Tibial artery (tissue), 4 donors: ENCODE measurements at regions of chr7 and their contacts with region 1.

Region 1: GRCh38 chr7:123682690-123683089 is 27.0 kb downstream of the LMOD2 start:
- DNase-seq: no peak
- H3K4me3 ChIP-seq: no peak overlapping the region
- H3K27ac ChIP-seq: no peak overlapping the region
- H3K4me1 ChIP-seq: no peaks in the 10 kb centered on the region
- H3K27me3 ChIP-seq: no peaks in the 10 kb centered on the region
- CTCF ChIP-seq: peak; percentile 50 to 54

Region 2: DNA sequence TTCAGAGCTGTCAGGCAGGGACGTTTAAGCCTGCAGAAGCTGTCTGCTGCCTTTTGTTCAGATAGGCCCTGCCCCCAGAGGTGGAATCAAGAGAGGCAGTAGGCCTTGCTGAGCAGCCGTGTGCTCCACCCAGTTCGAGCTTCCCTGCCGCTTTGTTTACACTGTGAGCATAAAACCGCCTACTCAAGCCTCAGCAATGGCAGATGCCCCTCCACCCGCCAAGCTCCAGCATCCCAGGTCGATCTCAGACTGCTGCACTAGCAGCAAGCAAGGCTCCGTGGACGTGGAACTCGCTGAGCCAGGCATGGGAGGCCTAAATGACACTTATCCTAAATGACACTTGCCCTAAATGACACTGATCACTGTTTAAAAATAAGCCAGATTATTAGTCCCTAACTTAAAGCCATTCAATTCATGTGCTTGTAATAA is 87.9 kb before region 1 on chr7:
- intact Hi-C with region 1: no loop called
- DNase-seq: no peak
- H3K4me3 ChIP-seq: no peak overlapping the region
- H3K27ac ChIP-seq: no peak overlapping the region
- H3K4me1 ChIP-seq: no peaks in the 10 kb centered on the region
- H3K27me3 ChIP-seq: no peaks in the 10 kb centered on the region
- CTCF ChIP-seq: no peak

Region 3: GRCh38 chr7:123865517-123866117 is 182.9 kb after region 1 on chr7:
- intact Hi-C with region 1: loop called (anchors 5 kb)
- DNase-seq: peak in 1 of 2 donors; percentile 32
- H3K4me3 ChIP-seq: no peak overlapping the region
- H3K27ac ChIP-seq: no peak overlapping the region
- H3K4me1 ChIP-seq: peaks cover 0 to 7% (median 0%) of the 10 kb centered on the region in 4 donors
- H3K27me3 ChIP-seq: no peaks in the 10 kb centered on the region
- CTCF ChIP-seq: peak; percentile 70 to 75

Region 4: GRCh38 chr7:124276019-124276622 is 593.4 kb after region 1 on chr7:
- intact Hi-C with region 1: no loop called
- DNase-seq: no peak
- H3K4me3 ChIP-seq: no peak overlapping the region
- H3K27ac ChIP-seq: no peak overlapping the region
- H3K4me1 ChIP-seq: no peaks in the 10 kb centered on the region
- H3K27me3 ChIP-seq: no peaks in the 10 kb centered on the region
- CTCF ChIP-seq: peak in 1 of 2 experiments; percentile 11